Common myeloid progenitor, CD34-positive (primary cell): ENCODE measurements at regions of chr20 and their contacts with region 1.

Region 1: GRCh38 chr20:64119681-64120341 is 12.4 kb upstream of the NPBWR2 start:
- DNase-seq: no peak
- H3K4me3 ChIP-seq: peak overlapping the region in 5 of 7 experiments; percentile 13 to 55 (median 43)
- H3K27ac ChIP-seq: no peak overlapping the region
- H3K4me1 ChIP-seq: peaks cover 0 to 14% (median 13%) of the 10 kb centered on the region in 4 experiments
- H3K27me3 ChIP-seq: peaks cover 0 to 2% (median 0%) of the 10 kb centered on the region in 5 experiments

Region 2: GRCh38 chr20:63750807-63751470 is 368.9 kb before region 1 on chr20:
- CTCF ChIA-PET with region 1: no interaction called
- POLR2A ChIA-PET with region 1: no interaction called
- DNase-seq: peak in 2 of 3 donors; percentile 39 to 53
- H3K4me3 ChIP-seq: no peak overlapping the region
- H3K27ac ChIP-seq: no peak overlapping the region
- H3K4me1 ChIP-seq: peaks cover 0 to 7% (median 5%) of the 10 kb centered on the region in 4 experiments
- H3K27me3 ChIP-seq: no peaks in the 10 kb centered on the region

Region 3: DNA sequence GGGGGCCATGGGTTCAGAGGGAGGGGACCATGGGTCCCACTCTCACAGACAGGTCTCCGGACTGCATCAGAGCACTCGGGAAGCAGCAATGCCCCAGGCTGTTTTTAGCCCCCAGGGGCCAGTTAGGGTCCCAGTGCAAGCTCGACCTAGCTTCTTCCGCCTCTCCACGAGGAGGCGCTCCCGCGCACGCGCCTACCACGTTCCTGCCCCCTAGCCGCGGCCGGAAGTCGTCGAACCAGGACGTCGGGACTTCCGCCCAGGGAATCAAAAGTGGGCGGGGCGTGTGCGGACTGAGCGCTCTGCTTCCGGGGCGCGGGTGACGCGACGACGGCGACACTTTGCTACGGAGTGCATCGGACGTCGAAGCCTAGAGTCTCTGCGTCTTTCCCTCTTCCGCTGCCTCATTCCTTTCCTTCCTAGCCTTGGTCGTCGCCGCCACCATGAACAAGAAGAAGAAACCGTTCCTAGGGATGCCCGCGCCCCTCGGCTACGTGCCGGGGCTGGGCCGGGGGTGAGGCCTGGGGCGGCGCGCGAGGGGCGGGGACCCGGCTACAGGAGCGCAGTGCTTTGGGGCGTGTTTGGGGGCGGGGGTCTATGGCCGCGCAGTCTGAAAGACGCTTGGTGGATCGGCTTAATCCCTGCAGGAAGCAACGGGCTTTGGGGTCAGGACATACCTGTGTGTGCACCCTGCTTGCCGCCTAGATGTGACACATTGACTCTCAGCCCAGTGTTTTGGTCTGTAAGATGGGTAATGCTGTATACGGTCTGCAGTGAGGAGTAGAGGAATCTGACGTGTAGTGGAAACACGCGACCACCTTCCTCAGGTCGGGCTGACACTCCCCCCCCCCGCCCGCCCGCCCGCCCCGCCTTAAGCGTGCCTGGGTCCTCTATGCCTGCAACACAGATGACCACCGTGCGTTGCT is 138.7 kb before region 1 on chr20 and contains the start of gene PRPF6:
- CTCF ChIA-PET with region 1: interaction called, 12 read pairs
- POLR2A ChIA-PET with region 1: no interaction called
- DNase-seq: peak; percentile 96 to 98 (median 98)
- H3K4me3 ChIP-seq: peak within 1 kb of the TSS; percentile 77 to 99 (median 89)
- H3K27ac ChIP-seq: peak within 1 kb of the TSS in 1 of 2 experiments; percentile 88
- H3K4me1 ChIP-seq: peaks cover 5 to 49% (median 43%) of the 10 kb centered on the region in 4 experiments
- H3K27me3 ChIP-seq: no peaks in the 10 kb centered on the region

Region 4: DNA sequence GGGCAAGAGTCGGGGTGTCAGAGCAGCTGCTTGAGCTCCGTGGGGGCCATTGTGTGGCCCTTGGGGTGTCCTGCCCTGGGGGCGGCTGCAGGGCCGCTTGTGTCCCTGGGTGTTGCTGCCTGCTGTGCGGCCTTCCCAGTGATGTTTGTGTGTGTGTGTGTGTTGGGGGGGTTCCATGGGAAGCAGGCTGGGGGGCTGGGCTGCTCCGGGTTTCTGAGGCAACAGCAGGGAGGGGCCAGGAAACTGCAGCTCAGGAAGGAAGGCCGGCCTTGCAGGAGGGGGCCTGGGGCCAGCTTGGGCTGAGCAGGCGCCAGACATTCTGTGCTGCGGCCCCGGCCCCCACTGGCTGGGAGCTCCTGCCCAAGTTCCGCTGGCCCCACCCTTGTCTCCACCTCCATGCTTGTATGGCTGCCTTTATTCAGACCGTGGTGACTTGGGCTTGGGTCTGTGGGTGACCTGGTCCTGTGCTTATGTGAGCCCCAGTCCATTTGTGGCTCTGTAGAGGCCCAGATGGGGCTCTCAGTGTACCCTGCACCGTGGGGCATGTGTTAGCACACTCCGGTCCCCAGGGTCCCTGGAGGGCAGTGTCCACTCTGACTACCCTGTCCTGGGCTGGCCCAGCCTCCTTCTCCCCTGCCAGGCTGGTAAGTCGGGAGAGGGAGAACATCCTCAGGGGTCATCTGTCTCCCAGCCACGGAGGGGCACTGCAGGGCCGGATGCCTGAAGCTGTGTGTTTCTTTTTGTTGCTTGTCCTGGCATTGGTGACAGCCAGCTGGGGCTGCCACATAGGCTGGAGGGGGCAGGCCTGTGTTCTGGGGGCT is 65.8 kb before region 1 on chr20:
- CTCF ChIA-PET with region 1: interaction called, 20 read pairs
- POLR2A ChIA-PET with region 1: interaction called, 3 read pairs
- DNase-seq: peak in 2 of 3 donors; percentile 51 to 52
- H3K4me3 ChIP-seq: peak overlapping the region in 5 of 7 experiments; percentile 3 to 59 (median 48)
- H3K27ac ChIP-seq: peak overlapping the region in 1 of 2 experiments; percentile 34
- H3K4me1 ChIP-seq: peaks cover 2 to 87% (median 80%) of the 10 kb centered on the region in 4 experiments
- H3K27me3 ChIP-seq: peaks cover 0 to 12% (median 0%) of the 10 kb centered on the region in 5 experiments

Region 5: GRCh38 chr20:64095927-64096326 is 23.9 kb before region 1 on chr20:
- CTCF ChIA-PET with region 1: interaction called, 22 read pairs
- POLR2A ChIA-PET with region 1: no interaction called
- DNase-seq: no peak
- H3K4me3 ChIP-seq: no peak overlapping the region
- H3K27ac ChIP-seq: no peak overlapping the region
- H3K4me1 ChIP-seq: peaks cover 0 to 3% (median 0%) of the 10 kb centered on the region in 4 experiments
- H3K27me3 ChIP-seq: no peaks in the 10 kb centered on the region

Region 6: DNA sequence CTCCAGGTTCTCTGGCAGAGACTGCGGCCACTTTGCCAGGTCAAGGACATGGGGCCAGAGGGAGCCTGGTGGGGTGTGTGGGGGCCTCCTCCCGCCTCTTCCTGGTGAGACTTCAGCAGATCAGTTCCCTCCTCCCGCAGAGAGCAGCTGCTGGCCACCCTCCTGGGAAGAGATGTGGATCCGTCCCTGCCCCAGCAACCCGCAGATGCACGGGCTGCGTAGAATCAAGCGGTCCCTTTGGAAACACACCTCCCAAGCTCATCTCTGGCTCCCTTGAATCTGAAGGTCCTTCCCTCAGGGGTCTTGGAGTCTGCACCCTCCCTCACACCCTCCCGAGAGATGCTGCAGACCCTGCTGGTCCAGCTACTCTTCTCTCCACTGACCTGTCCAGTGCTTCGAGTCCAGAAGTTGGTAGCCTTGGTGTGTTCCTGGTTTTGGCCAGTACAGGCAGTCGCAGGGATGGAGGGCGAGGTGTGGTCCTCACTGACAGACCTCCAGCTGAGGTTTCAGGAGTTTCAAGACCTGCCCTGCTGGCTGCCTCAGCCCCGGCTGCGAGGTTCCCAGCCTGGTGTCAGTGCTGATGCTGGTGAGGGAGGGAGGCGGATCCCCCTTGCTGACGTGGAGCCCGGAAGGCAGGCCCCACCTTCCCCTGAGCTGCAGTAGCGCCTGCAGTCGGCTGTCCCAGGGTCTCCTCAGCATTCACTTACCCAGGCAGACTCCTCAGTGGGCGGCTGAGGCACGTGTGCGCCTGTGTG is 12.7 kb before region 1 on chr20 and contains the start of gene NPBWR2:
- CTCF ChIA-PET with region 1: interaction called, 67 read pairs
- POLR2A ChIA-PET with region 1: no interaction called
- DNase-seq: peak; percentile 63 to 84 (median 79)
- H3K4me3 ChIP-seq: peak within 1 kb of the TSS in 2 of 7 experiments; percentile 44 to 53
- H3K27ac ChIP-seq: no peak within 1 kb of the TSS
- H3K4me1 ChIP-seq: peaks cover 0 to 55% (median 34%) of the 10 kb centered on the region in 4 experiments
- H3K27me3 ChIP-seq: peaks cover 0 to 3% (median 0%) of the 10 kb centered on the region in 5 experiments